ENCODE measurements at regions of chr17 and their contacts with region 1.

Region 1: GRCh38 chr17:76397687-76398487 is 13.5 kb downstream of the SPHK1 start:
- DNase-seq: peak; percentile 80

Region 2: GRCh38 chr17:76307299-76307965 is 90.5 kb before region 1 on chr17:
- in situ Hi-C with region 1: loop called (anchors 10 kb)
- DNase-seq: no peak